HepG2 (cell line): ENCODE measurements at regions of chr19 and their contacts with region 1.

Region 1: GRCh38 chr19:11528551-11529341 is at the start of gene ECSIT:
- DNase-seq: peak; percentile 98
- ATAC-seq: peak; percentile 98
- H3K4me3 ChIP-seq: peak within 1 kb of the TSS; percentile 80 to 95 (median 85)
- H3K27ac ChIP-seq: peak within 1 kb of the TSS; percentile 95
- H3K4me1 ChIP-seq: peaks cover 11% of the 10 kb centered on the region
- H3K27me3 ChIP-seq: no peaks in the 10 kb centered on the region
- CTCF ChIP-seq: peak; percentile 10; the same call in 1 of the 2 replicates
- EP300 ChIP-seq: no peak
- POLR2A ChIP-seq: peak; percentile 75 to 80
- RAD21 ChIP-seq: no peak
- total RNA-seq, gene ECSIT: 32.2 and 36.4 TPM in 2 replicates

Region 2: GRCh38 chr19:11453468-11454341 is 75.0 kb before region 1 on chr19:
- CTCF ChIA-PET with region 1: no interaction called
- POLR2A ChIA-PET with region 1: no interaction called
- in situ Hi-C with region 1: no loop called
- intact Hi-C with region 1: no loop called
- DNase-seq: no peak
- ATAC-seq: 0 out of 3 replicates have a peak, but pooled peaks have one; percentile 18
- H3K4me3 ChIP-seq: peak overlapping the region; percentile 17 to 45 (median 28); a peak in 4 of 6 replicates
- H3K27ac ChIP-seq: no peak overlapping the region
- H3K4me1 ChIP-seq: peaks cover 18% of the 10 kb centered on the region
- H3K27me3 ChIP-seq: peaks cover 1 to 12% of the 10 kb centered on the region in 2 experiments; a peak in 2 of 5 replicates
- CTCF ChIP-seq: peak; percentile 38
- EP300 ChIP-seq: no peak
- POLR2A ChIP-seq: no peak
- RAD21 ChIP-seq: no peak

Region 3: GRCh38 chr19:11505032-11505503 is 23.7 kb before region 1 on chr19:
- CTCF ChIA-PET with region 1: no interaction called
- POLR2A ChIA-PET with region 1: no interaction called
- in situ Hi-C with region 1: no loop called
- intact Hi-C with region 1: no loop called
- DNase-seq: peak; percentile 91
- ATAC-seq: peak; percentile 96
- H3K4me3 ChIP-seq: peak overlapping the region; percentile 77 to 84 (median 81)
- H3K27ac ChIP-seq: peak overlapping the region; percentile 77
- H3K4me1 ChIP-seq: peaks cover 18% of the 10 kb centered on the region
- H3K27me3 ChIP-seq: no peaks in the 10 kb centered on the region
- CTCF ChIP-seq: no peak
- EP300 ChIP-seq: no peak
- POLR2A ChIP-seq: peak in 1 of 2 experiments; percentile 50; a peak in 1 of 4 replicates
- RAD21 ChIP-seq: no peak

Region 4: DNA sequence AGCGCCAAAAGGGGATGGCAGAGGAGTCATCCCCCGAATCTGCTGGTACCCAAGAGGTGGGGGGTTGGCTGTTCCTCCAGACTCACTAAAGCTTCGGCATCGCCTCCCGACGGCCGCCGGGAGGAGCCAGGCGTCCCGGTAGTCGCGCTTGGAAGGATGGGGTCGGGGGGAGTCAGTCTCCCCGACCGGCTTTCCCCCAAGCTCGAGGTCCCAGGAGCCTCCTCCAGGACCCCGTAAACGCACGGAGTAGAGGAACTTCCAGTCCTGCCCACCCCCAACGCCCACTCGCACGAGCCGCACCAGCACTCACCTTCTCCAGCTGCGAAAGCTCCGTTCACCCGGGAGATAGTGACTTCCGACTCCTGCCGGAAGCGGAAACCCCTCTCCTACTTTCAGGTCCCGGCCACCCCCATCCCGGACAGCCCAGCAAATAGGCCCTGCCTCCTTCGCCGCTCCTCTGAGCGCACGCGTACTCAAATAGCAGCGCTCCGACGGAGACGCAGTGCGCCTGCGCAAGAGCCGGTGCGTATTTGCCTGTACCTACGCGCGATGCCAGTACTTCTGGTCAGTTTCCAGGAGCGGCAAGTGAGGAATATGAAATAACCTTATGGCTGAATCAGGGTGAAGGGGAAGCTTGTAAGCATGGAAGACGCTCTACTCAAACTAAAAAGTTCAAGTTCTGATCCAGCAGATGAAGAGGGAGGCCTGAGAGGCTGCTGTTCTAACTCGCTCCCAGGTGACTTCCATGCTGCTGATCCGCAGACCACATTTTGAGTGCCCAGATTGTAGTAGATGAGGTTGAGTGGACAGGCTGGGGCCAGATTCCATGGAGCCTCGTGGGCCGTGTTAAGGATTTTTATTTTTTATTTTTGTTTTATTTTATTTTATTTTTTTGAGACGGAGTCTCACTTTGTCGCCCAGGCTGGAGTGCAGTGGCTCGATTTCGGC is 30.4 kb after region 1 on chr19 and contains the start of gene ELOF1:
- CTCF ChIA-PET with region 1: no interaction called
- POLR2A ChIA-PET with region 1: interaction called, 33 read pairs
- in situ Hi-C with region 1: no loop called
- intact Hi-C with region 1: no loop called
- DNase-seq: peak; percentile 96
- ATAC-seq: peak; percentile 98
- H3K4me3 ChIP-seq: peak within 1 kb of the TSS; percentile 70 to 92 (median 82)
- H3K27ac ChIP-seq: peak within 1 kb of the TSS; percentile 74
- H3K4me1 ChIP-seq: peaks cover 31% of the 10 kb centered on the region
- H3K27me3 ChIP-seq: no peaks in the 10 kb centered on the region
- CTCF ChIP-seq: peak; percentile 19; the same call in 1 of the 2 replicates
- EP300 ChIP-seq: no peak
- POLR2A ChIP-seq: peak; percentile 85 to 98
- RAD21 ChIP-seq: peak; percentile 41; the same call in 1 of the 2 replicates
- total RNA-seq, gene ELOF1: 43.2 and 47.2 TPM in 2 replicates

Region 5: DNA sequence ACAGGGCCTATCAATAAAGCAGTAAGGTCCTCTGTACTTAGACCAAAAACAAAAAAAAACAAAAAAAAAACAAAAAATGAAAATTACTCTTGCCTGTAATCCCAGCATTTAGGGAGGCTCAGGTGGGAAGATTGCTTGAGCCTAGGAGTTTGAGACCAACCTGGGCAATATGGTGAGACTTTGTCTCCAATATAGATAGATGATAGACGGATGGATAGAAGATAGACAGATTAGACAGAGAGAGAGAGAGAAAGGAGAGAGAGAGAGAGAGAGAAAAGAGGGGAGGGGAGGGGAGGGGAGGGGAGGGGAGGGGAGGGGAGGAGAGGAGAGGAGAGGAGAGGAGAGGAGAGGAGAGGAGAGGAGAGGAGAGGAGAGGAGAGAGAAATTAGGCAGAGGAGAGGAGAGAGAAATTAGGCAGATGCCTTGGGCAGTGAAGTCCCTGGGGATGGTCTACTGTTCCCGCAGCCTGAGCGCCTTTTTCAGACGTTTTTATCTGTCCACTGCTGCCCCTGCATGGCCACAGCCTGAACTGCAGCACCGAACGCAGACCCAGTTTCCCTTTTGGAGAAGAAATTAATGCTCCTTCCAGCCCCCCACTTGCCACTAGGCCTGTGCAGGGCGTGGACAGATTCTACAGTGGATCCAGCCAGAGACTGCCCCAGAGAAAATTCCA is 58.7 kb after region 1 on chr19:
- CTCF ChIA-PET with region 1: no interaction called
- POLR2A ChIA-PET with region 1: no interaction called
- in situ Hi-C with region 1: no loop called
- intact Hi-C with region 1: no loop called
- DNase-seq: peak; percentile 47
- ATAC-seq: peak; percentile 90
- H3K4me3 ChIP-seq: peak overlapping the region; percentile 37 to 66 (median 41); a peak in 5 of 6 replicates
- H3K27ac ChIP-seq: no peak overlapping the region
- H3K4me1 ChIP-seq: 0 out of 2 replicates have a peak, but pooled peaks cover 10% of the 10 kb centered on the region
- H3K27me3 ChIP-seq: no peaks in the 10 kb centered on the region
- CTCF ChIP-seq: peak; percentile 86
- EP300 ChIP-seq: no peak
- POLR2A ChIP-seq: no peak
- RAD21 ChIP-seq: peak; percentile 80

Region 6: DNA sequence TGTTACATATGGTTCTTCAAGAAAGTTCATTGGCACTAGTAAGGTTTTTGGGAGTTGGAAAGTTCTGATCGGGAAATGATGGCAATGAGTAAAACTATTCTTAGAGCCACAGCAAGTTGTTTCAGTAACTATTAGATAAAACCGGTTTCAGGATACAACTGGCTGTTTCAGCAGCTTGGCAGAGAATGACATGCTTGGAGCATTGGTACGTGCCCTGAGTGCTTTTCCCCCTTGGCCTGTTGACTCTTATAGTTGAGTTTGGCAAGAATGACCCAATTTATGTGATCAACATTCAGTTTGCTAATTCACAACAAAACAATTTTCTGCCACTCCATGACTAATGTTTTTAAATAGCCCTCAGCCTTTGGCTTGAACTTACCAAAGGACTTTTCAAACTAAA is 258.8 kb after region 1 on chr19:
- CTCF ChIA-PET with region 1: no interaction called
- POLR2A ChIA-PET with region 1: no interaction called
- in situ Hi-C with region 1: no loop called
- intact Hi-C with region 1: no loop called
- DNase-seq: no peak
- ATAC-seq: no peak
- H3K4me3 ChIP-seq: no peak overlapping the region
- H3K27ac ChIP-seq: no peak overlapping the region
- H3K4me1 ChIP-seq: no peaks in the 10 kb centered on the region
- H3K27me3 ChIP-seq: no peaks in the 10 kb centered on the region
- CTCF ChIP-seq: no peak
- EP300 ChIP-seq: no peak
- POLR2A ChIP-seq: no peak
- RAD21 ChIP-seq: no peak